Dendritic cell treated with granulocyte-macrophage colony-stimulating factor and Interleukin-4, amounts not matched to agents 40 ng/mL and 50 ng/mL, for 4 days (primary cell): ENCODE measurements at regions of chr4 and their contacts with region 1.

Region 1: DNA sequence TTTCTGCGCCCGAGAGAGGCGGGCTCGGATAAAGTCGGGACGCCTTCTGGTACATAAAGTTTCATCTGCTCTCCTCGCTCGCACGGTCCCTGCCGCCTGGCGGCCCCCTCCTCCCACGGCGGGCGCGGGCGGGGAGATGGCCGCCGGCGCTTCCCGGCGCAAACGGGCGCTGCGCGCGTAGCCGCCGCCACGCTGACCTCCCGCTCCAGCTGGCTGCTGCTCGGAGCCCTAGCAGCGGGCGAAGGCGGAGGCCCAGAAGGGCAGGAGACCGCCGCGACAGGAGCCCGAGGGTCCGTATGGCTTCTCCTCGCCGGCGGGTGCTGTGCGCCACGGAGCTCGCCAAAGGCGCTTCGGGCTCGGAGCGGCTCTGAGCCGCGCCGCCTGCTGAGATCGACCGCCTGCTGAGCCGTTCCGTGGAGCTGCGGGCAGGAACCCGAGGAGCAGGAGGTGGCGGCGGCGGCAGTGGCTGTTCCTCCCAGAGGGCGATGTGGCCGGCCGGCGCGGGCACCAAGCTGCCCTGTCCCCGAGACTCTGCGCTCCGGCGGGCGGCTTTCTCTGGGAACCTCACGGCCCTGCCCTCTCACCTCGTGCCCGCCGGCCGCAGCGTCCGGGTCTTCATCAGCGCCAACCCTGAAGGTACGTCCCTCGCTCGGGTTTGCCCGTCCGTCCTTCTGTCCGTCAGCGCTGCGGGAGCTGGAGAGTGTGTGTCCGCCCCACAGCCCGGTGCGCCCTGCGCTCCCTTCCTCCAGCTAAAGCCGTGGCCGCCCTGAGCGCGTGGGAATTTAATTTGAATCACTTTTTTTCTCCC is at the start of gene NWD2:
- H3K4me3 Mint-ChIP-seq: no peak within 1 kb of the TSS
- H3K27ac Mint-ChIP-seq: no peak within 1 kb of the TSS
- H3K4me1 Mint-ChIP-seq: peaks cover 12% of the 10 kb centered on the region
- H3K27me3 Mint-ChIP-seq: peaks cover 57% of the 10 kb centered on the region

Region 2: DNA sequence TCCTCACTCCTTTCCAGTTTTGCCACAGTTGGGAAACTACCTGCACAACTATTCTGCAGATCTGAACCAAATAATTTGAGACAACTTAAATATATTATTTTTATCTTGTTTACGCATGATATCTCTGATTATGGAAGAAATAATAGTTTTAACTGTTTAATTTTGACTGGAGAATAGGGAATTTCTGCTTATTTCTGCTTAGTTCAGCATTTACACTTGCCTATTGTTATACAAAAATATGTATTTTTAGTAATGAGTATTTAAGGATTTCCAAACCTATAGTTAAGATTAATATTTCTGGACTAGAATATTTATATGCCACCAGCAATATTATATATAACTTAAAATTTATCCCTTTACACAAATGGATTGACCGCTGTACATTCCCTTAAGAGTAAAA is 125.3 kb after region 1 on chr4:
- intact Hi-C with region 1: loop called (anchors 10 kb)
- H3K4me3 Mint-ChIP-seq: no peak overlapping the region
- H3K27ac Mint-ChIP-seq: no peak overlapping the region
- H3K4me1 Mint-ChIP-seq: peaks cover 19% of the 10 kb centered on the region
- H3K27me3 Mint-ChIP-seq: no peaks in the 10 kb centered on the region